ENCODE measurements at regions of chr2 and their contacts with region 1.

Region 1: DNA sequence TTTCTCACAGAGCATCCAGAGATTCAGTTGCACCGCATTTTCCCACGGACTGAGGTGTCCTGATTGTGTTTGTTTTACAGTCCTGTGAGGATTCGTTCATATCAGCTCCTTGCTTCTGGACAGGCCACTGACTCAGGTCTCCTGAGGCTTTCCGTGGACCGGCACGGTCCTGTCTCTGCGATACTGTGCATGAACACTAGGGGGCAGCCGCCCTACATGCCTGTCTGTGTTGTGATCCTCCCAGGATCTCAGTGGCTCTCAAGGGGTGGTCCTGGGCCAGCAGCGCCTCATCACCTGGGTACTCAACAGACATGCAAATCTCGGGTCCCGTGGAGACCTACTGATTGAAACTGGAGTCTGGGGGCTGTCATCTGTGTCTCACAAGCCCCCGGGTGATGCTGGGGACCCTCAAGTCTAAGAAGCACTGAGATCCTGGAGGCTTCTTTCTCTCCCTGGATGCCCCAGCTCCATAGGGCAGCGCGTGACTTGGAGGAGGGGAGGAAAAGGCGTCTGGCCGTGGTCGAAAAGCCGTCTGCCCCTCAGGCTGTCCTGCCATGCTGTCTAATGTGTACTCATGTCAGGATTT is 28.9 kb downstream of the IL1R2 start:
- DNase-seq: peak; percentile 69 to 94
- H3K4me3 ChIP-seq: no peak overlapping the region
- H3K27ac ChIP-seq: no peak overlapping the region
- H3K4me1 ChIP-seq: peaks cover 0 to 3% of the 10 kb centered on the region in 2 donors
- H3K27me3 ChIP-seq: no peaks in the 10 kb centered on the region
- CTCF ChIP-seq: peak; percentile 97 to 99 (median 99)

Region 2: GRCh38 chr2:102070058-102070642 is 49.5 kb after region 1 on chr2:
- intact Hi-C with region 1: loop called (anchors 2 kb)
- DNase-seq: peak in 1 of 2 donors; percentile 94
- H3K4me3 ChIP-seq: no peak overlapping the region
- H3K27ac ChIP-seq: peak overlapping the region; percentile 73 to 79
- H3K4me1 ChIP-seq: peaks cover 17 to 37% of the 10 kb centered on the region in 2 donors
- H3K27me3 ChIP-seq: no peaks in the 10 kb centered on the region
- CTCF ChIP-seq: peak in 1 of 3 experiments; percentile 32

Region 3: DNA sequence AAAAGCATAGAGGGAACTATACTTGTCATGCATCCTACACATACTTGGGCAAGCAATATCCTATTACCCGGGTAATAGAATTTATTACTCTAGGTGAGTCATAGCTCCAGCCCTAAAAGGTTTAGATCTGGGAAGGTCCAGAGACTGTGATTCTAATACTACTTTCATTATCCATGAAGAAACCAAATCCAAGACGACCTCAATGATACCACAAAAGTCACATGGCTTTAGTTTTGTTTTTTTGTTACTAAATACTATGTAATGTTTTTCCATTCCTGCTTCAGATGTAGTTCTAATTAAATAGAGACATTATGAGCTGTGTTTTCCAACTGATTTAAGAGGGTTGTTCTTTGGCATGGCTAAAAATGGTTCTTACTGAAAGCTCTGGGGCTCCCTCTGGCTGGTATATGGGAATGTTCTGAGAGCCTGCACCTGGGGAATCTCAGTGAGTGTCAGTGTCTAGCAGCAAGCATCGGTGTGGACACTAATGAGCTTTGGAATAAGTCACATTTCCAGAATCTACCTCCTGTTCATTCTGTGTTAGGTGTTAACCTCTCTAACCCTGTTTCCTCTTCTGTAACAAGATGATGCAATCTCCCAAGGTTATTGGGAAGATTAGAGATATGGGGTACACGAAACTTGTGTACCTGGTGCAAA is 145.6 kb after region 1 on chr2:
- intact Hi-C with region 1: loop called (anchors 1 kb)
- DNase-seq: no peak
- H3K4me3 ChIP-seq: no peak overlapping the region
- H3K27ac ChIP-seq: no peak overlapping the region
- H3K4me1 ChIP-seq: no peaks in the 10 kb centered on the region
- H3K27me3 ChIP-seq: no peaks in the 10 kb centered on the region
- CTCF ChIP-seq: peak; percentile 47 to 74 (median 50)

Region 4: GRCh38 chr2:102187496-102188150 is 166.9 kb after region 1 on chr2:
- intact Hi-C with region 1: loop called (anchors 5 kb)
- DNase-seq: peak in 1 of 2 donors; percentile 67
- H3K4me3 ChIP-seq: peak overlapping the region; percentile 62 to 74
- H3K27ac ChIP-seq: no peak overlapping the region
- H3K4me1 ChIP-seq: peaks cover 0 to 4% of the 10 kb centered on the region in 2 donors
- H3K27me3 ChIP-seq: no peaks in the 10 kb centered on the region
- CTCF ChIP-seq: peak; percentile 24 to 41 (median 33)

Region 5: DNA sequence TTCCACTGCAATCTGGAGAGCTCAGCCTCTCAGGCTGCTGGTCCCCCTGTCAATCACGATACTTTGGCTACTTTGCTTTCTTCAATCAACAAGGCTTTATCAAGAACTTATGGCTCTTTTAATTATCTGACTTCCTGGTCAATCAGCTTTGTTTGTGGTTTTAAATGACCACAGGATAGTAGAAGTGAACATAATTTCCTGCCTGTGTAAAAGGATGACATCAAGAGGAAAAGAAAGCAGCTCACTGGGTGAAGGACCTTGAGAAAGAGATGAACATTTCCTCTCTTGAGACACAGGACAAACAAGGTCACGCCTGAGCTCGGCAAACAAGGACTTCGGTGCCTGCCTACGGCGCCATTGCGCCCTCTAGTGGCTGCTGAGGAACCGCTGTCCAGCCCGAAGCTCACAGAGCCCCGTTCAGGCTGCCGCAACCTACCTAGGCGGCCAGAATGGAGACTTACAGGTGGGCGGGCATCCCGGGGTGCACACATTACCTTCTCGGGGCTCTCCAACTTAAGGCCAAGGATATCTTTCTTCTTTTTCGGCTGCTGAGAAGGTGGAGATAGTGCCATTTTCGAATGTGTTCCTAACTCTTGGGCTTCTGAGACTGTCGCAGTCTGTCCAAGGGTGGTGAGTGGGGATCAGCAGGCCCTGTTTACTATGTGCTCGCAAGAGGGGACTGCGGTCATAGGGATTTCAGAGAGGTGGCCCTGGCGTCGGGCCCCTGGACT is 220.1 kb after region 1 on chr2:
- intact Hi-C with region 1: loop called (anchors 1 kb)
- DNase-seq: peak; percentile 71 to 95
- H3K4me3 ChIP-seq: peak overlapping the region; percentile 28 to 35
- H3K27ac ChIP-seq: peak overlapping the region; percentile 58 to 71
- H3K4me1 ChIP-seq: peaks cover 0 to 4% of the 10 kb centered on the region in 2 donors
- H3K27me3 ChIP-seq: no peaks in the 10 kb centered on the region
- CTCF ChIP-seq: peak; percentile 92 to 98 (median 98)

Region 6: DNA sequence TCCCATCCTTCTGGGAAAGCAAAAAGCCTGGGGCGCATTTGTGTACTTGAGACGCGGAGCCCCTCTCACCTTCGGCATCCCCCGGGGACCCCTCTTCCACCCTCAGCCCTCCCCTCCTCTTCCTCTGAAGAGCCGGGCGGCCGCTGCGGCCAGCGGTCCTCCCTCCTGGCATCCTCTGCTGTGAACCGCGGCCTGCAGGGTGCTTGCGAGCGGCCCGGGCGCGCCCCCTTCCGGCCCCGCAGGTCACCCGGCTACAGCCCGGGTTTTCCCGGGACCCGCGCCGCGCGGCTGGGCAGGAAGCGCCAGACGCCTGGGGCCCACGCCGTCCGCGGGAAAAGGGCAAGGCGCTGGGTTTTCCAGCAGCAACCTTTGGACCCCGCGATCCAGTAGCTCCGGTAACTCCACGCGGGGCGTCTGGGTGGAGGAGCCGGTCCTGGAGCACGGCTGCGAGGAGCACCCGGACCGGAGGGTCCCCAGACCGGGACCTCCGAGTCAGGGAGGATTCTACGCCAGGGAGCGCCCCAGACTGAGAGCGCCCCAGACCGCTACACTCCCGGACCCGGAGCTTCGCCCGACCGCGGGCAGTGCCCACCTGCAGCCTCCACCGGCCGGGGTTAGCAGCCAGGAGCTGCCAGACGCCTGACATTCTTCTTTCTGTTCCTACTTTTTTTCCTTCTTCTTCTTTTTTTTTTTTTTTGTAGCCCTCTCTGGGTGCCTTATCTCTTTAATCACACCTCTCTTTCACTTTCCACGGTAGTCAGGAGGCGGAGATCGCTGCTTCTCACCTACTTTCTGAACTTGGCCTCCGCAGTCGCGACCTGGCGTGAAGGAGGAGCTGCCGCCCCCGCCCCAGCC is 335.1 kb after region 1 on chr2 and contains the start of gene IL18R1:
- intact Hi-C with region 1: loop called (anchors 5 kb)
- DNase-seq: peak; percentile 10 to 84
- H3K4me3 ChIP-seq: peak within 1 kb of the TSS; percentile 66 to 91
- H3K27ac ChIP-seq: peak within 1 kb of the TSS; percentile 58 to 71
- H3K4me1 ChIP-seq: peaks cover 2 to 3% of the 10 kb centered on the region in 2 donors
- H3K27me3 ChIP-seq: no peaks in the 10 kb centered on the region
- CTCF ChIP-seq: peak; percentile 74 to 94 (median 89)
- total RNA-seq, gene IL18R1: 1.9 TPM

Measured in ascending aorta (tissue), 2 donors.